PC-9 (cell line): ENCODE measurements at regions of chr6 and their contacts with region 1.

Region 1: GRCh38 chr6:161370880-161371279 is 97.0 kb upstream of the AGPAT4 start:
- DNase-seq: peak in 1 of 2 experiments; percentile 10
- H3K4me3 ChIP-seq: no peak overlapping the region
- H3K27ac ChIP-seq: no peak overlapping the region
- H3K4me1 ChIP-seq: no peaks in the 10 kb centered on the region
- H3K27me3 ChIP-seq: peaks cover 10% of the 10 kb centered on the region
- CTCF ChIP-seq: peak; percentile 76

Region 2: GRCh38 chr6:159862103-159862502 is 1508.8 kb before region 1 on chr6:
- CTCF ChIA-PET with region 1: no interaction called
- POLR2A ChIA-PET with region 1: no interaction called
- intact Hi-C with region 1: loop called (anchors 10 kb)
- DNase-seq: no peak
- H3K4me3 ChIP-seq: no peak overlapping the region
- H3K27ac ChIP-seq: no peak overlapping the region
- H3K4me1 ChIP-seq: no peaks in the 10 kb centered on the region
- H3K27me3 ChIP-seq: 0 out of 2 replicates have a peak, but pooled peaks cover 5% of the 10 kb centered on the region
- CTCF ChIP-seq: no peak

Region 3: GRCh38 chr6:160520043-160520904 is 850.6 kb before region 1 on chr6:
- CTCF ChIA-PET with region 1: no interaction called
- POLR2A ChIA-PET with region 1: no interaction called
- intact Hi-C with region 1: loop called (anchors 2 kb)
- DNase-seq: peak in 1 of 2 experiments; percentile 41
- H3K4me3 ChIP-seq: no peak overlapping the region
- H3K27ac ChIP-seq: no peak overlapping the region
- H3K4me1 ChIP-seq: no peaks in the 10 kb centered on the region
- H3K27me3 ChIP-seq: peaks cover 14% of the 10 kb centered on the region; the same call in 1 of the 2 replicates
- CTCF ChIP-seq: peak; percentile 36; the same call in 1 of the 2 replicates

Region 4: DNA sequence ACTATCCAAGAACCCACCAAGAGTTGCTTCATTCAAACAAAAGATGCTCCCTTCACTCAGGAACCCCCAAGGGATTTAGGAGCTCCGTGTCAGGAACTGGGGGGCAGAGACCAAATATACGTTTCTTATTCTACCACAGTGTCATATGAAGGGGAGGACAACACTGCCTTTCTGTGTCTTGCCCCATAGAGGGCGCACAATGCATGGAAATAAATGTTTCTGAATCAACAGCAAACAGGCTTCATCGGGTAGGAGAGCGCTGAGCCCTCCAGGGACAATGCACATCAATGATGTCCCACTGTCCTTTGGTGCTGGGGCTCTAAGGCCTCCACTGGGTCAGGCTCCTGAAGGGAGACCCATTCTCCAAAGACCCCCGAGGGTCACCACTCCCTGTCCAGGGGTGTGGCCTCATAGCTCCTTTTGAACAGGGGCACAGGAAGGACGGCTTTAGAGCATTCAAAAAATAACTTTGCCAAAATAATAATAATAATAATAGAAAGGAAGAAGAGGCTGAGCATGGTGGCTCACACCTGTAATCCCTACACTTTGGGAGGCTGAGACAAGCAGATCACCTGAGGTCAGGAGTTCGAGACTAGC is 637.7 kb before region 1 on chr6:
- CTCF ChIA-PET with region 1: interaction called, 3 read pairs
- POLR2A ChIA-PET with region 1: no interaction called
- intact Hi-C with region 1: loop called (anchors 1 kb)
- DNase-seq: peak in 1 of 2 experiments; percentile 6
- H3K4me3 ChIP-seq: no peak overlapping the region
- H3K27ac ChIP-seq: no peak overlapping the region
- H3K4me1 ChIP-seq: no peaks in the 10 kb centered on the region
- H3K27me3 ChIP-seq: no peaks in the 10 kb centered on the region
- CTCF ChIP-seq: peak; percentile 70

Region 5: DNA sequence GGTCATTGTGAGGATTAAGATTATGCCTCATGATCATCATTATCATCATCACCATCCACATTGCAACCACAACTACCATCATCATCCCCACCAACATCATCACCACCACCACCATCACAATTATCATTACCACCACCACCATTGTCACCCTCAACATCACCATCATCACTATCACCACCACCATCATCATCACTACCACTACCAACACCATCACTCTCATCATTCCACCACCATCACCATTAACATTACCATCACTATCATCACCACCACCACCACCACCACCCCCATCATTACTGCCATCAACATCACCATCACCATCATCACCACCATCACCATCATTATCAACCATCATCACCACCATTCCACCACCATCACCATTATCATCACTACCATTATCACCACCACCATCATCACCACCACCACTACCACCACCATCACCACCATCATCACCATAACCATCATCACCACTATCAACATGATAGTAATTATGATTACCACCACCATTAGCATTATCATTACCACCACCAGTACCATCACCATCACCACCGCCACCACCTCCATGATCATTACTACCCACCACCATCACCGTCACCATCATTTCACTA is 621.6 kb before region 1 on chr6:
- CTCF ChIA-PET with region 1: no interaction called
- POLR2A ChIA-PET with region 1: no interaction called
- intact Hi-C with region 1: loop called (anchors 5 kb)
- DNase-seq: no peak
- H3K4me3 ChIP-seq: no peak overlapping the region
- H3K27ac ChIP-seq: no peak overlapping the region
- H3K4me1 ChIP-seq: no peaks in the 10 kb centered on the region
- H3K27me3 ChIP-seq: peaks cover 6% of the 10 kb centered on the region
- CTCF ChIP-seq: no peak

Region 6: DNA sequence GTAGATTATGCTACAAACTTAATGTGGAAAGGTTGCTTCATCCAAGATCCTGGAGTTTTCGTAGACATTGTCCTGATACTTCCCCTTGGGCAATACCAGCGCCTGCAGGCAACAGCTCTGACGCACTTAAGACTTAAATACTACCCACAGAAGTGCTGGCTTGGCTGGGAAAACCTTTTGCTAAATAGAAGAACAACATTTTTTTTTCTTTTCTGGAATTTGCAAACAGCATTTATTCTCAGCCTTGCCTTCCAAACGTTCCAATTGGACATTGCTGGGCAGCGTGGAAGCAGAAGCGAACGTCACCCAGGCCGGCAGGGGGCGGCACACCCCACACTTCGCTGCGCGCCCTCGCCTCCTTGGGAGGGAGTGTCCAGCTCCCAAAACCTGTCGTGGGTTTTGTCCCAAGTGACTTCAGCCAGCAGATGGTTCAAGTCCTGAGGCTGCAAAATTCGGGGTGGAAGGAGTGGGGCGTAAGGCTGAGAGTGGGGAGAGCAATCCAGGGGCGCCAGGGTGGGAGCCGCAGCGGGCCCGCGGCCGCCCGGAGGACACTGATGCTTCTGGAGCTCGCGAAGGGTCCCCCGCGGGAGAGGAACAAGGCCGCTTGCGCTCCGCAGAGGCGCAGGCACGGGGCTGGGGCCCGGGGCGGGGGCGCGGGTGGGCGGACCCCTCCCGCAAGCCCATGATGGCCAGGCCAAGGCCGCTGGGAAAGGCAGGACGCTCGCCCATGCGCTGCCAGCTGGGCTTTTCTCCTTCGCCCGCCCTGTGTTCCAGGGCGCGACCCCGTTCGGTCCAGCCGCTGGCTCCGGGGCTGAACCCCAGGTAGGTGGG is 440.1 kb before region 1 on chr6:
- CTCF ChIA-PET with region 1: no interaction called
- POLR2A ChIA-PET with region 1: no interaction called
- intact Hi-C with region 1: loop called (anchors 5 kb)
- DNase-seq: peak in 1 of 2 experiments; percentile 11
- H3K4me3 ChIP-seq: no peak overlapping the region
- H3K27ac ChIP-seq: no peak overlapping the region
- H3K4me1 ChIP-seq: no peaks in the 10 kb centered on the region
- H3K27me3 ChIP-seq: peaks cover 10% of the 10 kb centered on the region; the same call in 1 of the 2 replicates
- CTCF ChIP-seq: peak; percentile 66

Region 7: GRCh38 chr6:161639772-161640171 is 268.9 kb after region 1 on chr6:
- CTCF ChIA-PET with region 1: no interaction called
- POLR2A ChIA-PET with region 1: no interaction called
- intact Hi-C with region 1: no loop called
- DNase-seq: no peak
- H3K4me3 ChIP-seq: no peak overlapping the region
- H3K27ac ChIP-seq: no peak overlapping the region
- H3K4me1 ChIP-seq: no peaks in the 10 kb centered on the region
- H3K27me3 ChIP-seq: peaks cover under 1% of the 10 kb centered on the region; the same call in 1 of the 2 replicates
- CTCF ChIP-seq: no peak